ENCODE measurements at regions of chr2 and their contacts with region 1.

Region 1: DNA sequence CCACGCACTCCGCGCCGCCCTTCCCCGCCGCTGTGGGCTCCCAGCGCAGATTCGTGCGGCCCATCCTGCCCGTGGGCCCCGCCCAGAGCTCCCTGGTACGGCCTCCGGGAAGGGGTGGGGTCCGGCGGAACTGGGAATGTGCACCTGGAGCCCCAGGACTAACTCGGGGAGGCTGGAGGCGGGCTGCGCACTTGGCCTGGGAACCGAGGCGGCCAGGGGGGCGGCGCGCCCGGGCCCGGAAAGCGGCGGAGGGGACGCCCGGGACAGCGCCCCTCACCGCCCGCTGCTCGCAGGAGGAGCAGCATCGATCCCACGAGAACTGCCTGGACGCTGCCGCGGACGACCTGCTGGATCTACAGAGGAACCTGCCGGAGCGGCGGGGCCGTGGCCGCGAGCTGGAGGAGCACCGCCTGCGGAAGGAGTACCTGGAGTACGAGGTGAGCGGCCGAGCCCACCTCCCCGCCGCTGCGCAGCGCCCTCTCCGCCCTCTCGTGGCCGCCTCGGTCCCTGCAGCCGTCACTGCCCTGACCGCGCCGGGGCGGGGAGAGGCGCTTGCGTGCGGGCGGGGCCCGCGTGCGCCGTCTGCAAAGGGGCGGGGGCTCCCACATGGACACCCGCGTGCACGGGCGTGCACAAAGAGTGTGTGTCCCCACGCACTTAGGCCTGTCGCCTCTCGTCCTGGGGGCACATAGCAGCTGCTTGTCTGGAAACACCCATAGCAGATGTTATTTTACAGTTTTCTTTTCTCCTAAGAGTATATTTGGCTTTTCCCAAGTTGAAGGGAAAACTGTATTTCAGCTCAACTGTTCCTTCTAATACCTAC is 25.2 kb downstream of the PSD4 start:
- DNase-seq: peak; percentile 95
- ATAC-seq: peak; percentile 82
- H3K4me3 ChIP-seq: peak overlapping the region; percentile 78
- H3K27ac ChIP-seq: peak overlapping the region; percentile 80
- H3K4me1 ChIP-seq: peaks cover 15% of the 10 kb centered on the region
- H3K27me3 ChIP-seq: no peaks in the 10 kb centered on the region
- CTCF ChIP-seq: peak; percentile 86

Region 2: DNA sequence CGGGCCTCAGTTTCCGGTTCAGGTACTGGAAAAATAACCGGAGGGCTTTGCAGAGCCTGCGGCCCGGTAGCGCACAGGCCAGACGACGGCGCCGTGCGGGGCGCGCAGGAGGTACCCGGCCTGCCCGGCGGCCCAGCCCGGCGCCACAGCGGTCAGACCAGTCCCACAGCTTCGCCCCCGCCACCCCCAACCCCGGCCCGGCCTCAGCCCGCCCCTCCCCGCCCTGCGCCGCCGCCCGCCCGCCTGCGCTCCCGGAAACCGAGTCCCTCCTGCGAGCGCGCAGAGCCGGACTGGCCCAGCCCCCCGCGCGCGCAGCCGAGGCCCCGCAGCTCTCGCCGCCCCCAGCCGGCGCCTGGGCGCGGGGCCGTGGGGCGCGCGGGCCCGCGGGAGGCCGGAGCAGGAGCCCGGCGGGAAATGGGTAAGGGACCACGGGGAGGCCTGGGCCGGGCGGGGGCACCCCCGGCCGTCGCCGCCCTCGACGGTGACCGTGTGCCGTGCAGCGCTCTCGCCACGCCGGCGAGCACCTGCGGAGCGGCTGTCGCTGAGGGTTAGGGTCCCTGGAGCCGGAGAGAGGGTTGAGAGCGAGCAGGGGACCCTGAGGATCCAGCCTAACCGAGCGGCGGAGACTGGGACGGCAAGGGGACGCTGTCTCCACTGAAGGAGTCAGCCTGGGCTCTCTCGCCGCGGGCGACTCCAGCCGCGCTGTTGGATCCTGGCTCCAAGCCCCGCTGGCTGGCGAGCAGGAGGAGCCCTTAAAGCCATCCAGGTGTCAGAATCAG is 41.7 kb before region 1 on chr2:
- CTCF ChIA-PET with region 1: interaction called, 3 read pairs
- POLR2A ChIA-PET with region 1: no interaction called
- intact Hi-C with region 1: loop called (anchors 1 kb)
- DNase-seq: peak; percentile 75
- ATAC-seq: peak; percentile 60
- H3K4me3 ChIP-seq: peak overlapping the region; percentile 83
- H3K27ac ChIP-seq: peak overlapping the region; percentile 90
- H3K4me1 ChIP-seq: peaks cover 30% of the 10 kb centered on the region
- H3K27me3 ChIP-seq: no peaks in the 10 kb centered on the region
- CTCF ChIP-seq: no peak

Measured in PC-3 (cell line).